Heart left ventricle (tissue), 16 donors: ENCODE measurements at regions of chr6 and their contacts with region 1.

Region 1: DNA sequence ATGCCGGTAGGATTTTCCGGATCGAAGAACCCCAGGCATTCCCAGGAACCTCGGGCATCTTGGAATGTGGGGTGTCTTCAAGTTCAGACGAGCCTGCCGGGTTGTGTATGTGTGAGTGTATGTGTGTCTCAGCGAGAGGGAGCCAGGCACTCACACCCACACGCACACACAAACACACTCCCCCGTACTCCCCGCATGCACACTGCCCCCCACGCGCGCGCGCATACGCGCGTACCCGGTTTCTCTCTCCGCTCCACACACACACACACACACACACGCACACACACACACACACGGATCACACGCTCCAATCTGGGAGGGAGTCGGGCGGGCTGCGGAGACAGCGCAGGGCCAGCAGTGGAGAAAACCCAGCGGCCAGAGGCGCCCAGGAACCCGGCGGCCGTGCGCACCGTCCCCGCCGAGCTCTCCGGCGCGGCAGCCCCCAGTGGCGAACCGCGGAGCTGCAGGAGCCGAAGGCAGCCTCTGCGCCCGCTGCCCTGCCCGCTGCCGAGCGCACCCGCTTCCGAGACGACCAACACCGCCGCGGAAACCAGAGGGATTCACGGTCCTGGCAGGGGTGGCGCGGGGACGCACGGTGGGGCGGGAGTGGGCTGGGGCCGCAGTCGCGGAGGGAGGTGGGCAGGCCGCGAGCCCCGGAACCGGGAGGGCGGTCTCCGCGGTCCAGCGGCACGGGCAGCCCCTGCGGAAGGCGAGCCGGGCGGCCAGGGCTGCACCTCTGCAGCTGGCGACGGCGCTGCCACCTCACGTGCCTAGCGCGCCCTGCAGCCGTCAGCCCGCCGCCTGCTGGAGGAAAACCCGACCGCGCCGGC is at the start of gene LRFN2:
- DNase-seq: peak; percentile 49 to 83 (median 61)
- ATAC-seq: peak; percentile 48 to 97 (median 89)
- H3K4me3 ChIP-seq: peak within 1 kb of the TSS in 11 of 12 donors; percentile 11 to 51 (median 40)
- H3K27ac ChIP-seq: no peak within 1 kb of the TSS
- H3K4me1 ChIP-seq: peaks cover 0 to 21% (median 7%) of the 10 kb centered on the region in 12 donors
- H3K27me3 ChIP-seq: peaks cover 7 to 94% (median 31%) of the 10 kb centered on the region in 9 donors
- CTCF ChIP-seq: peak in 11 of 12 donors; percentile 29 to 73 (median 60)
- POLR2A ChIP-seq: no peak
- total RNA-seq, gene LRFN2: not detected

Region 2: GRCh38 chr6:40822619-40823018 is 235.2 kb after region 1 on chr6:
- intact Hi-C with region 1: loop called in 1 of 10 experiments (anchors 10 kb)
- DNase-seq: no peak
- ATAC-seq: no peak
- H3K4me3 ChIP-seq: no peak overlapping the region
- H3K27ac ChIP-seq: no peak overlapping the region
- H3K4me1 ChIP-seq: peaks cover 0 to 8% (median 0%) of the 10 kb centered on the region in 12 donors
- H3K27me3 ChIP-seq: peaks cover 0 to 2% (median 0%) of the 10 kb centered on the region in 9 donors
- CTCF ChIP-seq: no peak
- POLR2A ChIP-seq: no peak